Mammary epithelial cell (primary cell): ENCODE measurements at regions of chr2 and their contacts with region 1.

Region 1: DNA sequence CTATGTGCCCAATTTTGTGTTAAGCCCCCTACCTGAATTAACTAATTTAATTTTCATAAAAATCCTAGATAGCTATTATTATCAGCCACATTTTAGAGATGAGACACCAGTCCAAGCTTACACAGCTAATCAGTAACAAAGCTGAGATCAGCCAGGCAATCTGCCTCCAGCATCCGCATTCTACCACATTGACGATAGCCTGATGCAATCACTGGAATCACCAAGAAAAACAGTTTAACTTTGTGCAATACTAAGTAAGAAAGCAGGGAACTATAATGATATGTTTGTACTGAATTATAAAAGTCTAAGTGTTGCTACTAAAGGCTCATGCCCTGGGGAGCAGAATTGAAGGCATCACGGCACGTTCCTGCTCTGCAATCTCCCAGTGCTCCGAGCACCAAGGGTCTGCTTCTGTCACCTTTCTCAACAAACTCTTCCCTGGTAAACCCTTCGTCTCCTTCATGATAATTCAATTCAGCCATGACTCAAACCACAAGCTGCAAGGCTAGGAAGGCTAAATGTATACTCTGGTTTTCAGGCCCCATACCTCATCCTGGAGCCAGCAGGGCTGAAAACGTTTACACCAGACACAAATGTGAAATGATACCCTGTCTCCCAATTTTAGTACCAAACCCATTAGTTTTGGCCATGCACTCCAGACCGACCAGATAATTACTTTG is 19.4 kb downstream of the KANSL3 start:
- DNase-seq: no peak
- H3K4me3 ChIP-seq: no peak overlapping the region
- H3K27ac ChIP-seq: no peak overlapping the region
- H3K4me1 ChIP-seq: no peaks in the 10 kb centered on the region
- H3K27me3 ChIP-seq: no peaks in the 10 kb centered on the region
- CTCF ChIP-seq: no peak

Region 2: GRCh38 chr2:96580771-96581170 is 38.0 kb before region 1 on chr2:
- CTCF ChIA-PET with region 1: no interaction called
- dilution Hi-C with region 1: loop called (anchors 5 kb)
- in situ Hi-C with region 1: no loop called
- intact Hi-C with region 1: no loop called
- DNase-seq: peak; percentile 10
- H3K4me3 ChIP-seq: no peak overlapping the region
- H3K27ac ChIP-seq: no peak overlapping the region
- H3K4me1 ChIP-seq: no peaks in the 10 kb centered on the region
- H3K27me3 ChIP-seq: no peaks in the 10 kb centered on the region
- CTCF ChIP-seq: no peak

Region 3: GRCh38 chr2:96665083-96665569 is 46.4 kb after region 1 on chr2:
- CTCF ChIA-PET with region 1: no interaction called
- dilution Hi-C with region 1: no loop called
- in situ Hi-C with region 1: no loop called
- intact Hi-C with region 1: no loop called
- DNase-seq: peak; percentile 97
- H3K4me3 ChIP-seq: no peak overlapping the region
- H3K27ac ChIP-seq: peak overlapping the region; percentile 26
- H3K4me1 ChIP-seq: peaks cover 10% of the 10 kb centered on the region
- H3K27me3 ChIP-seq: no peaks in the 10 kb centered on the region
- CTCF ChIP-seq: no peak

Region 4: GRCh38 chr2:96960153-96960961 is 341.6 kb after region 1 on chr2:
- CTCF ChIA-PET with region 1: no interaction called
- dilution Hi-C with region 1: no loop called
- in situ Hi-C with region 1: no loop called
- intact Hi-C with region 1: loop called (anchors 10 kb)
- DNase-seq: peak; percentile 54
- H3K4me3 ChIP-seq: no peak overlapping the region
- H3K27ac ChIP-seq: no peak overlapping the region
- H3K4me1 ChIP-seq: peaks cover 10% of the 10 kb centered on the region
- H3K27me3 ChIP-seq: no peaks in the 10 kb centered on the region
- CTCF ChIP-seq: peak; percentile 91 to 95